Sigmoid colon (tissue), 7 donors: ENCODE measurements at regions of chr10 and their contacts with region 1.

Region 1: DNA sequence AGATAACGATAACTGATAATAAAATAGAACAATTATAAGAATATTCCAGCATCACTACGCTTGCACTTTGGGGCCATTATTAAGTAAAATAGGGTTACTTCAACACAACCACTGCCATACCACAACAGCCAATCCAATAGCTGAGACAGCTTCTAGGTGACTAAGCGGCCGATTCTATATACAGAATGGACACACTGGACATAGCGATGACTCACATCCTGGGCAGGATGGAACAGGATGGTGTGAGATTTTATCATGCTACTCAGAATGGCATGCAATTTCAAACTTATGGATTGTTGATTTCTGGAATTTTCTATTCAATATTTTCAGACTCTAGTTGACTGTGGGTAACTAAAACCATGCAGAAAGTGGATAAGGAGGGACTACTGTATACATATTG is 920.9 kb downstream of the LRMDA start:
- DNase-seq: no peak
- H3K4me3 ChIP-seq: no peak overlapping the region
- H3K27ac ChIP-seq: peak overlapping the region in 3 of 4 donors; percentile 51 to 69 (median 57)
- H3K4me1 ChIP-seq: peaks cover 0 to 53% (median 26%) of the 10 kb centered on the region in 4 donors
- H3K27me3 ChIP-seq: no peaks in the 10 kb centered on the region
- CTCF ChIP-seq: no peak
- EP300 ChIP-seq: no peak
- POLR2A ChIP-seq: no peak

Region 2: GRCh38 chr10:76282061-76283035 is 70.0 kb before region 1 on chr10:
- intact Hi-C with region 1: loop called (anchors 1 kb)
- DNase-seq: peak; percentile 84
- H3K4me3 ChIP-seq: no peak overlapping the region
- H3K27ac ChIP-seq: peak overlapping the region in 3 of 4 donors; percentile 44 to 59 (median 59)
- H3K4me1 ChIP-seq: peaks cover 0 to 55% (median 42%) of the 10 kb centered on the region in 4 donors
- H3K27me3 ChIP-seq: no peaks in the 10 kb centered on the region
- CTCF ChIP-seq: no peak
- EP300 ChIP-seq: peak in 2 of 4 donors; percentile 12 to 30
- POLR2A ChIP-seq: no peak

Region 3: GRCh38 chr10:76311752-76312636 is 40.3 kb before region 1 on chr10:
- intact Hi-C with region 1: no loop called
- DNase-seq: no peak
- H3K4me3 ChIP-seq: no peak overlapping the region
- H3K27ac ChIP-seq: peak overlapping the region; percentile 0 to 46 (median 35)
- H3K4me1 ChIP-seq: peaks cover 0 to 48% (median 41%) of the 10 kb centered on the region in 4 donors
- H3K27me3 ChIP-seq: no peaks in the 10 kb centered on the region
- CTCF ChIP-seq: peak in 3 of 4 experiments; percentile 15 to 19 (median 18)
- EP300 ChIP-seq: no peak
- POLR2A ChIP-seq: no peak

Region 4: DNA sequence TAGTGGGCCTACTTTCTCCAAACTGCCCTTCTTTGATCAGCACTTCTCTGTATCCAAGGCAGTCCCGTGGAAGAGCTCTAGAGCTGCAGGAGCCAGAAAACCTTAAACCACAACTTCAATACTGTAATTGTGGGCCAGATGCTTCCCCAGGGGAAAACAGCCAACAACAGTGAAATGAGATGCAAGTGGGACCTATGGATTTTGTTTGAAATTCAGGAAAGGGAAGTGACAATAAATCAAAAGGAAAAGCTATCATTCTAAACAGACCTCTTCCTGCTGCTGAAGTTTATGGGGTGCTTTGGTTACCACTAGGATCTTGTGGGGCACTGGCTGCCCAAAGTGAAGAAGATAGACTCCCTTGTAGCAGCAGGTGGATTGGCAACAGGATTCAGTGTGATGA is 110.8 kb after region 1 on chr10:
- intact Hi-C with region 1: loop called (anchors 5 kb)
- DNase-seq: no peak
- H3K4me3 ChIP-seq: no peak overlapping the region
- H3K27ac ChIP-seq: no peak overlapping the region
- H3K4me1 ChIP-seq: peaks cover 0 to 48% (median 30%) of the 10 kb centered on the region in 4 donors
- H3K27me3 ChIP-seq: no peaks in the 10 kb centered on the region
- CTCF ChIP-seq: no peak
- EP300 ChIP-seq: no peak
- POLR2A ChIP-seq: no peak